ENCODE measurements at regions of chr12 and their contacts with region 1.

Region 1: DNA sequence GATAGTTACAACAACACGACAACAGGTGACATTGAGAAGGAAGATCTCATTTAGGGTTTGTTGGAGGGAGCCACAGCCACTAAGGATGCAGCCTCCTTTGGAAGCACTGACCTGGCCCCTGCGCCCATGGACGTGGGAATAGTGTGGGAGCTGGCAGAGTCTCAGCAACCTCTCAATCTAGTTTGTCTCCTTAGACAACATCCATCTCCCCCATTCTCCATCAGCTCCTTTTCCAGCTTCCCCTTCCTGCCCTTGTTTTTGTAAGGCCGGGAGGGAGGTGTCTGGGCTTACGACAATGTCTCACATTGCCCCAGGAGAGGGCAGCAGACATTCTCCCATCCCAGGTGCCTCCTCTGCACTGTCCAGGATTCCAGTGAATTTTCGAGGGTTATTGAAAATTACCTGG is 170.2 kb upstream of the PZP start:
- DNase-seq: peak; percentile 59 to 65
- H3K4me3 ChIP-seq: no peak overlapping the region
- H3K4me3 Mint-ChIP-seq: no peak overlapping the region
- H3K27ac Mint-ChIP-seq: no peak overlapping the region
- H3K4me1 ChIP-seq: no peaks in the 10 kb centered on the region
- H3K4me1 Mint-ChIP-seq: no peaks in the 10 kb centered on the region
- H3K27me3 ChIP-seq: no peaks in the 10 kb centered on the region
- H3K27me3 Mint-ChIP-seq: peaks cover 6% of the 10 kb centered on the region
- CTCF ChIP-seq: peak; percentile 50 to 87

Region 2: DNA sequence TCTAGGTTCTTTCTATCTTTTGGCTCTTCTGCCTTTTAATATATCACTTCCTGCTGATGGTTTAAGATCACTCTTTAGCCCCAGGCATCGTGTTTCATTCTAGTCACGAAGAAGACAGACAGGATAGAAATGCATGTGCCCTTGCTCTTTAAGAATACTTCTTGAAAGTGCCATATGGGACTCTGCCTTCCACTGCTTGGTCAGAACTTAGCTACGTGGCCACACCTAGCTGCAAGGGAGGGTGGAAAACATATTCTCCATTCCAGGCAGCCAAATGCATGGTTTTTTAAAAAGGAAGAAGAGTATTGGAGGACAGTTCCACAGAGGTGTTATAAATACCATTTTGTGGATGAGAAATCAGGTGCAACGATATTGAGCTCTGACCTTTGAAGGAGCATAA is 86.0 kb after region 1 on chr12:
- CTCF ChIA-PET with region 1: interaction called, 16 read pairs
- POLR2A ChIA-PET with region 1: no interaction called
- intact Hi-C with region 1: no loop called
- DNase-seq: no peak
- H3K4me3 ChIP-seq: no peak overlapping the region
- H3K4me3 Mint-ChIP-seq: no peak overlapping the region
- H3K27ac Mint-ChIP-seq: no peak overlapping the region
- H3K4me1 ChIP-seq: 0 out of 2 replicates have a peak, but pooled peaks cover 5% of the 10 kb centered on the region
- H3K4me1 Mint-ChIP-seq: peaks cover 15% of the 10 kb centered on the region
- H3K27me3 ChIP-seq: no peaks in the 10 kb centered on the region
- H3K27me3 Mint-ChIP-seq: no peaks in the 10 kb centered on the region
- CTCF ChIP-seq: no peak

Region 3: DNA sequence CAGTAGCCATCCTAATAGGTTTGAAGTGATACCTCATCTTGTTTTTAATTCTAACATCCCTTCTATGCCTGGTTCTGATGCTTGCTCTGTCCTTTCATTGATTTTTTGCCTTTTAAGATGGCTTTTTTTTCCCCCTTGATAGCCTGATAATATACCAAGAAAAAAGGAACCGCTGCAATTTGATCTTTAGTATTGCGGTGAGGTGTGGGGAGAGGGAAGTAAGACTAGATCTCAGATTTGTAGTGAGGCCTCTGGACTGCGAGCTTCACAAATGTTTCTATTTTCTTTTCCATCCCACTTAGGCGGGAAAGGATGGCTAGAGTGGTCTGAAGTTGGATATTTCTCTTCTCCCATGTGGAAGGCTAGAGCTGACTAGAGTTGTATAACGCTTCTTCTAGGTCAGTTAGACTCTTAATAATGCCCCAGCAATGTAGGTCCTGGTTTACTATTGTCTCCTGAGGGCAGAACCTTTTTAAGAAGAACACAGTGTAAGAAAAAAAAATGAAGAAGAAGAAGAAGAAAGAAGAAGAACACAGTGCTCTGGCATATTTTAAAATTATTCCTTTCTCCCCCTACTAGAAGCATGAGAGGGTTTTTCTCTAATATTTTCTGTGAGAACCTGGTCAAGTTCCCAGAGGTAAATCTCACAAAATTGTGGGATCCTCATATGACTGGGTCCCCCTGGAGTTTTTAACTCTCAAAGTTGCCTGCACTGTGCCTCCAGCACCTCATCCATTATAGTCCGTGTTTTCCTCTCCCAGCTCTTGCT is 241.2 kb after region 1 on chr12:
- CTCF ChIA-PET with region 1: no interaction called
- POLR2A ChIA-PET with region 1: no interaction called
- intact Hi-C with region 1: loop called (anchors 2 kb)
- DNase-seq: no peak
- H3K4me3 ChIP-seq: no peak overlapping the region
- H3K4me3 Mint-ChIP-seq: no peak overlapping the region
- H3K27ac Mint-ChIP-seq: no peak overlapping the region
- H3K4me1 ChIP-seq: no peaks in the 10 kb centered on the region
- H3K4me1 Mint-ChIP-seq: no peaks in the 10 kb centered on the region
- H3K27me3 ChIP-seq: no peaks in the 10 kb centered on the region
- H3K27me3 Mint-ChIP-seq: no peaks in the 10 kb centered on the region
- CTCF ChIP-seq: peak; percentile 27 to 28

Region 4: GRCh38 chr12:9707864-9708808 is 329.7 kb after region 1 on chr12:
- CTCF ChIA-PET with region 1: interaction called, 4 read pairs
- POLR2A ChIA-PET with region 1: no interaction called
- intact Hi-C with region 1: loop called (anchors 5 kb)
- DNase-seq: peak; percentile 54 to 64
- H3K4me3 ChIP-seq: no peak overlapping the region
- H3K4me3 Mint-ChIP-seq: no peak overlapping the region
- H3K27ac Mint-ChIP-seq: no peak overlapping the region
- H3K4me1 ChIP-seq: peaks cover 4% of the 10 kb centered on the region
- H3K4me1 Mint-ChIP-seq: peaks cover 9% of the 10 kb centered on the region
- H3K27me3 ChIP-seq: no peaks in the 10 kb centered on the region
- H3K27me3 Mint-ChIP-seq: no peaks in the 10 kb centered on the region
- CTCF ChIP-seq: peak; percentile 96 to 98

Measured in Caco-2 (cell line).